ENCODE measurements at regions of chr22 and their contacts with region 1.

Region 1: DNA sequence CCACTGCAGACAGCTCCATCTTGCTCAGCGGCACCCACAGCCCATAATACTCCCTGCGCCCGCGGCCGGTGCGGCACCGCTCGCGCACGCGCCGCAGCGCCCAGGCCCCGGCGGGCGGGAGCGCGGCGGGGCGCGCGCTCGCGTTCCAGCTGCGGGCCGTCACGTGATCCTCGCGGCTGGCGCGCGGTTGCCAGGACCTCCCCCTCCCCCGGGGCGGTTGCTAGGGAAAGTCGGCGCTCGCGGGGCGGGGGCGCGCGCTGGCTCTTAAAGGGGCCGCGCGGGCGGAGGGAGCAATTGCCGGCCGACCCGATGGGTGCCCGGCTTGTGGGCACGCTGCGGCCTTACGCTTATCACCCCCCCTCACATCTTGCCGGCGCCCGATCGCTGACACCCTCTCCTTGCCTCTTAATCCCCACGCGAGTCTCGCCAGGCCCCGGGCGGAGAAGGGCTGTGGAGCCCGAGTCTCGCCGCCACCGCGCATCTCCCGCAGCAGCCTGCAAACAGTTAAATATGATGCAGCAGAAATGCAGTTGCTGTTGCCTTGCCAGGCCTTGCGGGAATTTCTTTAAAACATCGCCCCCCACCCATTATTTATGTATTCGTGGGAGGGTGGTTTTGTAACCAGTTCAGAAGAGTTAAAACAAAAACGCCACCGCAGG is at the start of gene CBX6:
- DNase-seq: peak; percentile 96 to 99 (median 97)
- ATAC-seq: peak; percentile 56 to 90 (median 86)
- H3K4me3 ChIP-seq: peak within 1 kb of the TSS; percentile 65 to 98 (median 81)
- H3K27ac ChIP-seq: peak within 1 kb of the TSS; percentile 81 to 99 (median 97)
- H3K4me1 ChIP-seq: peaks cover 0 to 48% (median 37%) of the 10 kb centered on the region in 12 donors
- H3K27me3 ChIP-seq: no peaks in the 10 kb centered on the region
- CTCF ChIP-seq: peak in 1 of 12 donors; percentile 2
- POLR2A ChIP-seq: peak in 1 of 2 donors; percentile 58
- total RNA-seq, gene CBX6: 28.3 to 59.0 (median 43.9) TPM

Region 2: GRCh38 chr22:38766076-38766777 is 106.1 kb before region 1 on chr22:
- intact Hi-C with region 1: loop called in 4 of 10 experiments (anchors 2 to 5 kb)
- DNase-seq: peak in 1 of 5 donors; percentile 78
- ATAC-seq: peak in 3 of 4 donors; percentile 18 to 46 (median 46)
- H3K4me3 ChIP-seq: no peak overlapping the region
- H3K27ac ChIP-seq: no peak overlapping the region
- H3K4me1 ChIP-seq: peaks cover 0 to 3% (median 0%) of the 10 kb centered on the region in 12 donors
- H3K27me3 ChIP-seq: no peaks in the 10 kb centered on the region
- CTCF ChIP-seq: peak; percentile 33 to 71 (median 57)
- POLR2A ChIP-seq: no peak

Region 3: GRCh38 chr22:38927033-38927781 is 54.9 kb after region 1 on chr22:
- intact Hi-C with region 1: loop called in 8 of 10 experiments (anchors 1 to 5 kb)
- DNase-seq: peak; percentile 67 to 88 (median 81)
- ATAC-seq: peak; percentile 49 to 84 (median 76)
- H3K4me3 ChIP-seq: peak overlapping the region in 9 of 12 donors; percentile 29 to 45 (median 39)
- H3K27ac ChIP-seq: peak overlapping the region in 11 of 12 donors; percentile 10 to 75 (median 66)
- H3K4me1 ChIP-seq: peaks cover 0 to 33% (median 19%) of the 10 kb centered on the region in 12 donors
- H3K27me3 ChIP-seq: peaks cover 0 to 15% (median 0%) of the 10 kb centered on the region in 9 donors
- CTCF ChIP-seq: peak; percentile 36 to 84 (median 66)
- POLR2A ChIP-seq: no peak

Region 4: DNA sequence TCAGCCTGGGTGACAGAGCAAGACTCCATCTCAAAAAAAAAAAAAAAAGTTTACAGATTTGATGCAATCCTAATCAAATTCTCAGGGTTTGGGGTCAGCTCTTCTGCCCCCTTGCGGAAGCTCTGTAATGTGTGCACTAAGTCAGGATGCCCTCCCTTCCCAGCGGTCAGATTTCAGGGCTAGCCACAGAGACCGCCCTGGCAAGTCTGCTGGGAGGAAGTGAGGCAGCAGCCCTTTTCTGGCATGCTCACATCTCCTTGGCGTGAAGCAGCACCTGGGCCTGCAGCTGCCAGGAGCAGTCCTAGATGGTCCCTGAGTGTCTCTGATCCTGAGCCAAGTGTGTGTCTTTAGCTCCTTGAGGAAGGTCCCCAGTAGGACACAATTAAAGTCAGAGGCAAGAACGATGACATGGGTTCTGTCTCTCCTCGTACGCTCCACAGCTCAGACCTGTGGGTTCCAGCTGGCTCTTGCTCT is 130.9 kb after region 1 on chr22:
- intact Hi-C with region 1: loop called (anchors 1 to 5 kb)
- DNase-seq: peak; percentile 67 to 81 (median 75)
- ATAC-seq: peak; percentile 81 to 94 (median 92)
- H3K4me3 ChIP-seq: no peak overlapping the region
- H3K27ac ChIP-seq: no peak overlapping the region
- H3K4me1 ChIP-seq: peaks cover 0 to 12% (median 1%) of the 10 kb centered on the region in 12 donors
- H3K27me3 ChIP-seq: peaks cover 0 to 5% (median 0%) of the 10 kb centered on the region in 9 donors
- CTCF ChIP-seq: peak; percentile 63 to 86 (median 75)
- POLR2A ChIP-seq: no peak

Region 5: GRCh38 chr22:39123751-39124601 is 251.7 kb after region 1 on chr22:
- intact Hi-C with region 1: loop called in 9 of 10 experiments (anchors 2 to 10 kb)
- DNase-seq: no peak
- ATAC-seq: peak in 1 of 4 donors; percentile 48
- H3K4me3 ChIP-seq: no peak overlapping the region
- H3K27ac ChIP-seq: no peak overlapping the region
- H3K4me1 ChIP-seq: peaks cover 0 to 4% (median 0%) of the 10 kb centered on the region in 12 donors
- H3K27me3 ChIP-seq: no peaks in the 10 kb centered on the region
- CTCF ChIP-seq: no peak
- POLR2A ChIP-seq: no peak

Region 6: GRCh38 chr22:39319270-39320022 is 447.1 kb after region 1 on chr22 and contains the start of gene RPL3:
- intact Hi-C with region 1: loop called in 4 of 10 experiments (anchors 2 to 10 kb)
- DNase-seq: peak; percentile 96 to 98 (median 97)
- ATAC-seq: peak; percentile 87 to 94 (median 90)
- H3K4me3 ChIP-seq: peak within 1 kb of the TSS; percentile 58 to 93 (median 78)
- H3K27ac ChIP-seq: peak within 1 kb of the TSS; percentile 81 to 100 (median 96)
- H3K4me1 ChIP-seq: peaks cover 22 to 50% (median 42%) of the 10 kb centered on the region in 12 donors
- H3K27me3 ChIP-seq: no peaks in the 10 kb centered on the region
- CTCF ChIP-seq: peak in 6 of 12 donors; percentile 9 to 39 (median 27)
- POLR2A ChIP-seq: peak in 1 of 2 donors; percentile 79
- total RNA-seq, gene RPL3: 237 to 911 (median 336) TPM